ENCODE measurements at regions of chr1 and their contacts with region 1.

Region 1: DNA sequence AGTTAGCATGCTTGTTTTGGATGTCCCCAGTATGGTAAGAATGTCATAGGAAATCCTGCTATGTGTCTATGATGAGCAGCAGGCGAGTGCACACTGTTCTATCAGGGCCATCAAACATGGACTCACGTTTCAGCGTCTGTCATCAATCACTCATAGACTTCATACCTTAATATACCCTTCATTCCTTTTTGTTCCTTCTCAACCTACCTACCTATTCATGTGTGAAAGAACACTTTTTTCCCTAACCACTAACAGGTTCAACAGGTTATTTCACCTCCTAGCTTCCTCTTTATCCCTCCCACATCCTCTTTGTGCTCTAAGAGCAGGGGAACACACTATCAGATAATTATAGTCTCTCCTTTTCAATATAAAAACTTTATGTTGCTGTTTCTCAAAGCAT is 300.6 kb downstream of the TM2D1 start:
- DNase-seq: no peak
- ATAC-seq: no peak
- H3K4me3 ChIP-seq: no peak overlapping the region
- H3K27ac ChIP-seq: no peak overlapping the region
- H3K4me1 ChIP-seq: peaks cover 23% of the 10 kb centered on the region
- H3K27me3 ChIP-seq: no peaks in the 10 kb centered on the region
- CTCF ChIP-seq: no peak

Region 2: DNA sequence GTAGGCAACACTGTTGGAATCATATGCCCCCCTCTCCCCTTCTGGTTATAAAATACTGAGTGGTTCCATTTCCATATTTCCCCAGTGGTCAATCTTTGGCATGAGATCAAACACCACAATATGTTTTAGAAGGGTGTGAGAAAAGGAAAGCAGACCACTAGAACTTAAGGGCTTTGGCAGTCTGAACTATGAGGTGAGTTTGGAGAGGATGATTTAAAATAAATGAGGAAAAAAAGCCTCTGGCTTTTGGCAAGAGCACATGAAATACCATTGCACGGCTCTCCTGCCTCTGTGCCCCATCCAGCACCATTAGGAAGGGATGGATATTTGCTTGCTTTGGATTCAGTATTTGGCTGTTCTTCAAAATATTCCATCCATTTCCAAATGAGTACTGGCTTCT is 1011.3 kb before region 1 on chr1:
- intact Hi-C with region 1: loop called in 1 of 2 experiments (anchors 10 kb)
- DNase-seq: no peak
- ATAC-seq: no peak
- H3K4me3 ChIP-seq: no peak overlapping the region
- H3K27ac ChIP-seq: no peak overlapping the region
- H3K4me1 ChIP-seq: no peaks in the 10 kb centered on the region
- H3K27me3 ChIP-seq: no peaks in the 10 kb centered on the region
- CTCF ChIP-seq: no peak

Region 3: DNA sequence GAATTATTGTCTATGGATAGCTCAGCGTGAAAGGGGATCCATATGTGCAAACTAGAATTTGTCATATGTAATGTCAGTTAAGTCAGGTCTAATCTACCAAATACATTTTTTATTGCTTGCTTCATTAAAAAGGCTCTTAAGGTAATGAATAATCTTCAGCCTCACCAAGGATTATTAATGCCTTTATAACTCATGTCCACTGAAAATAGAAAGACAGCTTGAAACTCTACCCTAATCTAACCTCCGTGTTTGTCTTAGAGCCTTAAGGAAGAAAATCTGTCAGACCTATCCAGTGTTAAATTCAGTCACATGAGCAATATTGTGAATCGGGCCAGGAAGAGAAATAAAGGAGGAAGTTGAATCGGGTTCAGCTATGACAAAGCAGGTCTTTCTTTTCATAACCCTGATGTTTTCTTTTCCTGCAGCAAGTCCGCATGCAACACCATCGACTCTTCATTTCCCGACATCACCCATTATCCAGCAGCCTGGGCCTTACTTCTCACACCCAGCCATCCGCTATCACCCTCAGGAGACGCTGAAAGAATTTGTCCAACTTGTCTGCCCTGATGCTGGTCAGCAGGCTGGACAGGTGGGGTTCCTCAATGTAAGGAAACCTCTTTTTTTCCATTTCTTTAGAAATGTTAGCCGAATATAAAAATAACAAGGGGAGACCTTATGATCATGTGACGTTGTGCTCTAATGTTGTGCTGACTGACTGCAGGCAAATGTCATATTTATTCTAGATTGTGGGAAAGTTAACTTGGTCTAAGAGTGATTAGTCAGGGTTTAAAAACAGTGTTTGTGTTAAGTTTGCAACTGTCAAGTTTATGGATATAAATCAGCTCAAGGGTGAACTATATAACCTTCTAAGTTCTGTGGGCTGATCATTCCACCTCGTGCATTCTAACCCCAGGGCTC is 20.4 kb before region 1 on chr1:
- intact Hi-C with region 1: no loop called
- DNase-seq: no peak
- ATAC-seq: peak in 3 of 4 donors; percentile 50 to 72 (median 71)
- H3K4me3 ChIP-seq: peak overlapping the region; percentile 11
- H3K27ac ChIP-seq: peak overlapping the region; percentile 69
- H3K4me1 ChIP-seq: peaks cover 34% of the 10 kb centered on the region
- H3K27me3 ChIP-seq: no peaks in the 10 kb centered on the region
- CTCF ChIP-seq: no peak